MCF 10A (cell line): ENCODE measurements at regions of chr9 and their contacts with region 1.

Region 1: GRCh38 chr9:90914868-90915483 is 113.4 kb downstream of the SYK start:
- DNase-seq: peak; percentile 85
- H3K4me3 Mint-ChIP-seq: no peak overlapping the region
- H3K27ac Mint-ChIP-seq: no peak overlapping the region
- H3K4me1 Mint-ChIP-seq: peaks cover 17% of the 10 kb centered on the region
- H3K27me3 Mint-ChIP-seq: no peaks in the 10 kb centered on the region
- CTCF ChIP-seq: peak; percentile 86

Region 2: GRCh38 chr9:90883661-90884060 is 31.3 kb before region 1 on chr9:
- CTCF ChIA-PET with region 1: no interaction called
- POLR2A ChIA-PET with region 1: no interaction called
- intact Hi-C with region 1: no loop called
- DNase-seq: no peak
- H3K4me3 Mint-ChIP-seq: no peak overlapping the region
- H3K27ac Mint-ChIP-seq: no peak overlapping the region
- H3K4me1 Mint-ChIP-seq: no peaks in the 10 kb centered on the region
- H3K27me3 Mint-ChIP-seq: no peaks in the 10 kb centered on the region
- CTCF ChIP-seq: no peak

Region 3: DNA sequence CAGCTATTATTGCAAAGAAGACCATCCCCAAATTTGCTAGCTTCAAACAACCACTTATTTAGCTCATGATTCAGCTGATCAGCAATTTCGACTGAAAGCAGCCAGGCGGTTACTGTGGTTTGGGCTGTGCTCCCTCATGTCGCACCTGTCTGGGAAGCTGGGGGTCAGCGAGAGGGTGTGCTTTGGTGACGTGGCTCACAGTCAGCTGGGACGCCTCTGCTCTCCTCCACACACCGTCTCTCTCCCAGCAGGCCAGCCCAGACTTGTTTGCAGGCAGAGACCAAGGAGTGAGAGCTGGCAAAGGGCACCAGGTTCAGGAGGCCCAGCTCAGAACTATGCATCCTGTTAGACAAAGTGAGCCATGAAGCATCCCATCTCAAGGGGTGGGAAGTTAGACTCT is 27.6 kb after region 1 on chr9:
- CTCF ChIA-PET with region 1: interaction called, 11 read pairs
- POLR2A ChIA-PET with region 1: interaction called, 36 read pairs
- intact Hi-C with region 1: no loop called
- DNase-seq: peak; percentile 93
- H3K4me3 Mint-ChIP-seq: no peak overlapping the region
- H3K27ac Mint-ChIP-seq: peak overlapping the region; percentile 24
- H3K4me1 Mint-ChIP-seq: peaks cover 22% of the 10 kb centered on the region
- H3K27me3 Mint-ChIP-seq: no peaks in the 10 kb centered on the region
- CTCF ChIP-seq: no peak

Region 4: GRCh38 chr9:90991953-90992352 is 77.0 kb after region 1 on chr9:
- CTCF ChIA-PET with region 1: interaction called, 26 read pairs
- POLR2A ChIA-PET with region 1: no interaction called
- intact Hi-C with region 1: loop called (anchors 5 kb)
- DNase-seq: peak; percentile 39
- H3K4me3 Mint-ChIP-seq: no peak overlapping the region
- H3K27ac Mint-ChIP-seq: peak overlapping the region; percentile 59
- H3K4me1 Mint-ChIP-seq: peaks cover 56% of the 10 kb centered on the region
- H3K27me3 Mint-ChIP-seq: no peaks in the 10 kb centered on the region
- CTCF ChIP-seq: no peak

Region 5: DNA sequence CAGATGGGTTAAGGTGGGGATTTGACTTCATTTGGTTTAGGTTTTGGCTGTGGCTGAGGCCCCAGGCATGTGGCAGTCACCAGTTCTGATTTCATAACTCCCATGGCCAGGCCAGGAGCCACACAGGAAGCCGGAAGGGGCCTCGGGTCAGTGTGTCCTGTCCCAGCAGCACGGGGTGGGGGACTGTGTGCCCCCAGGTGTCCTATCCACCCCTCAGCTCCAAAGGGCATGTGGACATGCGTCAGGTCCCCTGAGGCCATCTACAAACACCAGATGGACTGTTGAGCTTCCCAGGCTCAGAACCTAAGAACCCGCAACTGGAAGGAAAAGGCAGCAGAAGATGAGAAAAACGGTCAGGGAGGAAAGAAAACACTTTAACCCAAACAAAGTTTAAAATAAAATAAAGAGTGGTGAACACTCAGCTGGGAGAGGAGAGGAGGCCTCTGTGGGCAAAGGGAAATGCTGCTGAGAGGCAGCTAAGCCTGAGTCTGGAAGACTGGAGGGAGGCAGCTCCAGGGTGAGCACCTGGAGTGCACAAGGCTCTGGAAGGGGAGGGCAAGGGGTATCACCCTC is 186.0 kb after region 1 on chr9:
- CTCF ChIA-PET with region 1: interaction called, 3 read pairs
- POLR2A ChIA-PET with region 1: interaction called, 10 read pairs
- intact Hi-C with region 1: no loop called
- DNase-seq: peak; percentile 31
- H3K4me3 Mint-ChIP-seq: peak overlapping the region; percentile 38
- H3K27ac Mint-ChIP-seq: peak overlapping the region; percentile 43
- H3K4me1 Mint-ChIP-seq: peaks cover 34% of the 10 kb centered on the region
- H3K27me3 Mint-ChIP-seq: no peaks in the 10 kb centered on the region
- CTCF ChIP-seq: no peak

Region 6: GRCh38 chr9:91361291-91362050 is 446.5 kb after region 1 on chr9 and contains the start of gene AUH:
- CTCF ChIA-PET with region 1: interaction called, 20 read pairs
- POLR2A ChIA-PET with region 1: interaction called, 5 read pairs
- intact Hi-C with region 1: no loop called
- DNase-seq: peak; percentile 75
- H3K4me3 Mint-ChIP-seq: peak within 1 kb of the TSS; percentile 93
- H3K27ac Mint-ChIP-seq: peak within 1 kb of the TSS; percentile 98
- H3K4me1 Mint-ChIP-seq: peaks cover 38% of the 10 kb centered on the region
- H3K27me3 Mint-ChIP-seq: no peaks in the 10 kb centered on the region
- CTCF ChIP-seq: no peak
- total RNA-seq, gene AUH: 16.1 and 20.9 TPM in 2 replicates

Region 7: GRCh38 chr9:91676046-91676445 is 761.1 kb after region 1 on chr9:
- CTCF ChIA-PET with region 1: interaction called, 3 read pairs
- POLR2A ChIA-PET with region 1: no interaction called
- intact Hi-C with region 1: loop called (anchors 1 kb)
- DNase-seq: peak; percentile 65
- H3K4me3 Mint-ChIP-seq: no peak overlapping the region
- H3K27ac Mint-ChIP-seq: peak overlapping the region; percentile 63
- H3K4me1 Mint-ChIP-seq: no peaks in the 10 kb centered on the region
- H3K27me3 Mint-ChIP-seq: no peaks in the 10 kb centered on the region
- CTCF ChIP-seq: peak; percentile 27